ENCODE measurements at regions of chr11 and their contacts with region 1.

Region 1: GRCh38 chr11:71179898-71180605 is 72.3 kb downstream of the SHANK2 start:
- DNase-seq: peak; percentile 78 to 90
- H3K4me3 ChIP-seq: no peak overlapping the region
- H3K4me3 Mint-ChIP-seq: no peak overlapping the region
- H3K27ac Mint-ChIP-seq: peak overlapping the region; percentile 73
- H3K4me1 ChIP-seq: peaks cover 25% of the 10 kb centered on the region
- H3K4me1 Mint-ChIP-seq: peaks cover 30% of the 10 kb centered on the region
- H3K27me3 ChIP-seq: no peaks in the 10 kb centered on the region
- H3K27me3 Mint-ChIP-seq: no peaks in the 10 kb centered on the region
- CTCF ChIP-seq: no peak

Region 2: DNA sequence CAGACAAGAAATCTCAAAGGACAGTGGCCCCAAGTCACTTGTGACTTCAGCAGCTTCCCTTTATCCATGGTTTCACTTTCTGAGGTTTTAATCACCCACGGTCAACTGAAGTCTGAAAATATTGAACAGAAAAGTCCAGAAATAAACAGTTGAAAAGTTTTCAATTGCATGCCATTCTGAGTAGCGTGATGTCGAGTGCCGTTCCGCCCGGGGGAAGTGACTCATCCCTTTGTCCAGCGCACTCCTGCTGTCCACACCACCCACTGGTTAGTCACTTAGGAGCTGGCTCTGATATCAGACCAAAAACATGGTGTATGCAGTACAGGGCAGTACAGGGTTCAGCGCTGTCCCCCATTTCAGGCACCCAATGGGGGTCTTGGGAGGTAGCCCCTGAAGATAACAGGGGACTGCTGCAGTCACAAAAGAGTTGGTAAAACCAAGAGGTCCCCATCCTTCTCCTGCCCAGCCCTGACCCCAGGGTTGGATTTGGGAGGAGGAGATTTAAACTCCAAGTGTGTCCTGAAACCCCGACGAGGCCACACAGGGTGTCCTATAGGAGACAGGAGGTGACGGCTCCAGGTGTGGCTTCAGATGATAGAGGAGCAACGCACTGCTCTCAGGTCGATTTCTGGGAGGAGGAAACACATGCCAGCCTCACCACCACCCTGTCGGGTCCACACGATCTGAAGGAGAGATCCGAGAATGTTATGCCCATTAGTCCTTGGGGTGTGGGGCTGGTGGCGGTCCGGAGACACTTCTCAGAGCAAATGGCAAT is 391.6 kb before region 1 on chr11:
- CTCF ChIA-PET with region 1: no interaction called
- POLR2A ChIA-PET with region 1: no interaction called
- intact Hi-C with region 1: no loop called
- DNase-seq: no peak
- H3K4me3 ChIP-seq: no peak overlapping the region
- H3K4me3 Mint-ChIP-seq: no peak overlapping the region
- H3K27ac Mint-ChIP-seq: no peak overlapping the region
- H3K4me1 ChIP-seq: no peaks in the 10 kb centered on the region
- H3K4me1 Mint-ChIP-seq: no peaks in the 10 kb centered on the region
- H3K27me3 ChIP-seq: no peaks in the 10 kb centered on the region
- H3K27me3 Mint-ChIP-seq: no peaks in the 10 kb centered on the region
- CTCF ChIP-seq: no peak

Region 3: GRCh38 chr11:71163371-71163770 is 16.7 kb before region 1 on chr11:
- CTCF ChIA-PET with region 1: no interaction called
- POLR2A ChIA-PET with region 1: no interaction called
- intact Hi-C with region 1: loop called (anchors 2 kb)
- DNase-seq: peak in 1 of 2 experiments; percentile 47
- H3K4me3 ChIP-seq: no peak overlapping the region
- H3K4me3 Mint-ChIP-seq: no peak overlapping the region
- H3K27ac Mint-ChIP-seq: peak overlapping the region; percentile 12
- H3K4me1 ChIP-seq: peaks cover 20% of the 10 kb centered on the region
- H3K4me1 Mint-ChIP-seq: peaks cover 27% of the 10 kb centered on the region
- H3K27me3 ChIP-seq: no peaks in the 10 kb centered on the region
- H3K27me3 Mint-ChIP-seq: no peaks in the 10 kb centered on the region
- CTCF ChIP-seq: no peak

Region 4: GRCh38 chr11:71240865-71241691 is 61.0 kb after region 1 on chr11:
- CTCF ChIA-PET with region 1: no interaction called
- POLR2A ChIA-PET with region 1: no interaction called
- intact Hi-C with region 1: no loop called
- DNase-seq: peak; percentile 35 to 54
- H3K4me3 ChIP-seq: no peak overlapping the region
- H3K4me3 Mint-ChIP-seq: no peak overlapping the region
- H3K27ac Mint-ChIP-seq: peak overlapping the region; percentile 11
- H3K4me1 ChIP-seq: no peaks in the 10 kb centered on the region
- H3K4me1 Mint-ChIP-seq: peaks cover 15% of the 10 kb centered on the region
- H3K27me3 ChIP-seq: no peaks in the 10 kb centered on the region
- H3K27me3 Mint-ChIP-seq: no peaks in the 10 kb centered on the region
- CTCF ChIP-seq: no peak

Region 5: GRCh38 chr11:71286701-71287643 is 106.9 kb after region 1 on chr11:
- CTCF ChIA-PET with region 1: no interaction called
- POLR2A ChIA-PET with region 1: no interaction called
- intact Hi-C with region 1: no loop called
- DNase-seq: peak in 1 of 2 experiments; percentile 38
- H3K4me3 ChIP-seq: no peak overlapping the region
- H3K4me3 Mint-ChIP-seq: no peak overlapping the region
- H3K27ac Mint-ChIP-seq: no peak overlapping the region
- H3K4me1 ChIP-seq: peaks cover 30% of the 10 kb centered on the region
- H3K4me1 Mint-ChIP-seq: peaks cover 38% of the 10 kb centered on the region
- H3K27me3 ChIP-seq: no peaks in the 10 kb centered on the region
- H3K27me3 Mint-ChIP-seq: no peaks in the 10 kb centered on the region
- CTCF ChIP-seq: no peak